ENCODE measurements at regions of chr5 and their contacts with region 1.

Region 1: GRCh38 chr5:113330533-113331208 is 104.1 kb downstream of the TSSK1B start:
- DNase-seq: peak; percentile 54
- ATAC-seq: peak; percentile 86
- H3K4me3 ChIP-seq: no peak overlapping the region
- H3K27ac ChIP-seq: no peak overlapping the region
- H3K4me1 ChIP-seq: peaks cover 0 to 11% of the 10 kb centered on the region in 2 experiments; a peak in 2 of 4 replicates
- H3K27me3 ChIP-seq: no peaks in the 10 kb centered on the region
- CTCF ChIP-seq: peak; percentile 50 to 88 (median 76); a peak in 5 of 6 replicates
- POLR2A ChIP-seq: no peak
- RAD21 ChIP-seq: peak; percentile 95

Region 2: GRCh38 chr5:112995764-112996618 is 334.7 kb before region 1 on chr5:
- CTCF ChIA-PET with region 1: interaction called, 34 read pairs
- POLR2A ChIA-PET with region 1: no interaction called
- RAD21 ChIA-PET with region 1: no interaction called
- intact Hi-C with region 1: loop called (anchors 1 kb)
- DNase-seq: peak; percentile 42
- ATAC-seq: peak; percentile 87
- H3K4me3 ChIP-seq: no peak overlapping the region
- H3K27ac ChIP-seq: no peak overlapping the region
- H3K4me1 ChIP-seq: no peaks in the 10 kb centered on the region
- H3K27me3 ChIP-seq: no peaks in the 10 kb centered on the region
- CTCF ChIP-seq: peak; percentile 72 to 97 (median 81)
- POLR2A ChIP-seq: no peak
- RAD21 ChIP-seq: peak; percentile 92

Region 3: DNA sequence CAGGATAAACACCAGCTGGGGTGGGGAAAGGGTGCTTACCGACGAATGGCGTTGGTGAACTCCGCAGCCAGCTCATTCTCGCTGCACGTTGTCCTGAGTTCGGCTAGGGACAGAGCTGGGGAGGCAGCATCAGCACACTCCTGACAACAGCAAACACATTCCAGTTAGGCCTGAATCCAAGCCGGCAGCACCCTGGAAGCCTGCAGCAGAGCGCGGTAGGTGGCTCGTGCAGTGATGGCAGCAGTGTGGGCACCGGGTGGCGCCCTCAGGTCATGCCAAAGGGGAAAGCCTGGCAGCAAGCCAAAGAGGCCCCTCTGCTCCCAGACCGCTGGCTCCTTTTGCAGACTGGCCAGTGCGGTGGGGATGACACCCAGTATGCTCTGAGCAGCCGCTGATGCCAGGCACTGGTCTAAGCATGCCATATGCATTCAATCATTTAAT is 287.2 kb before region 1 on chr5:
- CTCF ChIA-PET with region 1: no interaction called
- POLR2A ChIA-PET with region 1: no interaction called
- RAD21 ChIA-PET with region 1: no interaction called
- intact Hi-C with region 1: loop called (anchors 1 kb)
- DNase-seq: no peak
- ATAC-seq: peak; percentile 38; the same call in 1 of the 2 replicates
- H3K4me3 ChIP-seq: no peak overlapping the region
- H3K27ac ChIP-seq: no peak overlapping the region
- H3K4me1 ChIP-seq: peaks cover 6 to 24% of the 10 kb centered on the region in 2 experiments; a peak in 3 of 4 replicates
- H3K27me3 ChIP-seq: no peaks in the 10 kb centered on the region
- CTCF ChIP-seq: peak; percentile 19 to 40 (median 26); a peak in 3 of 6 replicates
- POLR2A ChIP-seq: no peak
- RAD21 ChIP-seq: peak; percentile 78

Region 4: GRCh38 chr5:113204525-113205161 is 126.0 kb before region 1 on chr5:
- CTCF ChIA-PET with region 1: interaction called, 5 read pairs
- POLR2A ChIA-PET with region 1: no interaction called
- RAD21 ChIA-PET with region 1: no interaction called
- intact Hi-C with region 1: loop called (anchors 1 kb)
- DNase-seq: no peak
- ATAC-seq: no peak
- H3K4me3 ChIP-seq: no peak overlapping the region
- H3K27ac ChIP-seq: no peak overlapping the region
- H3K4me1 ChIP-seq: peaks cover 33 to 65% of the 10 kb centered on the region in 2 experiments
- H3K27me3 ChIP-seq: no peaks in the 10 kb centered on the region
- CTCF ChIP-seq: no peak
- POLR2A ChIP-seq: no peak
- RAD21 ChIP-seq: no peak